ENCODE measurements at regions of chr14 and their contacts with region 1.

Region 1: DNA sequence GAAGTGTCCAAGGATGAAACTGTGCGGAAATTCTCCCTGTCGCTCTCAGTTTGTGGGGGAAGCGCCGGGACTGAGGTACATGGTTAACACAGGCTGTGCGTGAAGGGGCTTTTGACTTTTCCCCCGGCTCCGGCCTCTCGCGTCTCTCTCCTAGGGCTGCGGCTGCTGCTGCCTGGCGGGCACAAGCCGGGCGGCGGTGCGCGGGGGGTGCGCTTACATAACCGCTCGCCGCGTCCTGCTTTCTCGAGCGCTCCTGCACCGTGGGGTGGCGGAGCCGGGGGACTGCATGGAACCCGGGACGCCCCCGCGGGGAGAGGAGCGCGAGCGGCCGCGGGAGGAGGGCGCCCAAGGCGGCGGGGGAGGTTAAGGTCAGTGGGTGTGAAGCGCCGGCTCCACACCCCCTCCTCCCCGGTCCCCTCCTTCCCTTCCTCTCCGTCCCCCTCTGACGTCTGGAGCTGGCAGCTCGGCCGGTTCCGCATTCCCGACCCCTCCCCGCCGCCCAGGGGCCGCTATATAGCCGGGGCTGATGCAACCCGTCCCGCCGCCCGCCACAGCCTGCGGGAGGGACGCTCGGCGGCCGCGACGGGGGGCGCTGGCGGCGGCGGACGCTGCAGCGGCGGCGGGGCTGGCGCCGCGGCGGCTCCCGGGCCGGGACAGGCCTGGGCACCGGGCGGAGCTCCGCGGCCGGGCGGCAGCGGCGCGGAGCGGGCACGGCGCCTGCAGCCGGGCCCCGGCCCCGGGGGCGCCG is at the start of gene JDP2:
- DNase-seq: peak; percentile 55
- H3K4me3 ChIP-seq: peak within 1 kb of the TSS; percentile 79
- H3K27ac ChIP-seq: peak within 1 kb of the TSS; percentile 21
- H3K27me3 ChIP-seq: no peaks in the 10 kb centered on the region
- CTCF ChIP-seq: peak; percentile 14; the same call in 1 of the 2 replicates
- polyA plus RNA-seq, gene JDP2: 46.5 and 49.1 TPM in 2 replicates

Region 2: DNA sequence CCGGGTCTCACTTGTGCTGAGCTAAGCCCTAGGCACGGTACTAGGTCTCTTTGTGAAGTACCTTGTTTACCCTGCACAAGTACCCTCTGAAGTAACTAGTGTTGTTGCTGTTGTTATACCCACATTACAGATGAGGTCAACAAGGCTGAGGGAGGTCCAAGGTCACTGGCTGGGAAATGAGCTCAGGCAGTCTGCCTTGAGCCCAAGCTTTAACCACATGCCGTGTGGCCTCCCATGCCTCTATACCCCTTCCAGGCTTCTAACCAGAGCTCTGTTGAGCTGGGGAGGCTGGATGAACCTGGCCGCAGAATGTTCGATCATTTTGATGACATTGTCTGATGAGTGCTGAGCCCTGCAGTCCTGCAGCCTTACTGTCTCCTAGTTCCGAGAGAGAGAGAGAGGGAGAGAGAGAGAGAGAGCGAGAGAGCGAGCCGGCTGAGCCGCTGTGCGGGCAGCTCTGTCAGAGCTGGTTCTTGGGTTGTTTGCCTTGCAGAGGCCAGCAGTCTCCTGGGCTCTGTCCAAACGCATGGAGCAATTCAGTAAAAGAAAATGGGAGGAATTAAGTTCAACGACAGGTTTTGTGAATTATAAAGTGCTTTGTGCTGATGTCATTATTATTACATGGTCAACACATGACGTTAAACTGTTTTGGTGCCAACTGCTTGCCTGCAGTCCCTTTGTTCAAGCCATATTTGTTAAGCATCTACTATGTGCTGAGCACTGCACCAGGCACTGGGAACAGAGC is 13.2 kb after region 1 on chr14:
- CTCF ChIA-PET with region 1: interaction called, 7 read pairs
- POLR2A ChIA-PET with region 1: interaction called, 16 read pairs
- DNase-seq: peak; percentile 81
- H3K4me3 ChIP-seq: no peak overlapping the region
- H3K27ac ChIP-seq: peak overlapping the region; percentile 69
- H3K27me3 ChIP-seq: no peaks in the 10 kb centered on the region
- CTCF ChIP-seq: no peak

Measured in AG04450 (cell line).